Posterior cingulate gyrus (tissue), 11 donors: ENCODE measurements at regions of chr19 and their contacts with region 1.

Region 1: DNA sequence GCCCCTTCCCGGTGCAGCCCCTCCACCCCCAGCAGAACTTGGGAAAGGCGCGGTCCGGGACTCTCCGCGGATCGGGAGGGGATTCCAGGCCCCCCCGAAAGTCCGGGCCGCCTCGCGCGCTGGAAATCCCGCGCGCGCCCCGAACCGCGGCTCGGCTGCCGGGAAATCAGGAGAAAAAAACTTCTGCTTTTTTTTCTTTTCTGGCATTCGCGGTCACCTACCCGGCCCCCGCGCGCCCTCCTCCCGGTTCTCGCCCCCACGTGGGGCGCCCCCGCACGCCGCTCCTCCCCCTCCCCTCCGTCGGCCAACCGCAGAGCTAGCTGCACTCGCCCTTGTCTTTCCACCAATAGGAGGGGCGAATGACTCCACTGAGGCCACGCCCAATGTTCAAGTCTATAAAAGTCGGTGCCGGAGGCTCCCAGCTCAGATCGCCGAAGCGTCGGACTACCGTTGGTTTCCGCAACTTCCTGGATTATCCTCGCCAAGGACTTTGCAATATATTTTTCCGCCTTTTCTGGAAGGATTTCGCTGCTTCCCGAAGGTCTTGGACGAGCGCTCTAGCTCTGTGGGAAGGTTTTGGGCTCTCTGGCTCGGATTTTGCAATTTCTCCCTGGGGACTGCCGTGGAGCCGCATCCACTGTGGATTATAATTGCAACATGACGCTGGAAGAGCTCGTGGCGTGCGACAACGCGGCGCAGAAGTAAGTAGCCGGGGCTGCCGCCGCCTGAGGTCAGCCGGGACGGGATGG is at the start of gene GADD45B:
- DNase-seq: peak; percentile 95 to 100 (median 97)

Region 2: GRCh38 chr19:2578901-2579677 is 103.2 kb after region 1 on chr19:
- intact Hi-C with region 1: loop called (anchors 1 kb)
- DNase-seq: peak; percentile 71 to 98 (median 84)

Region 3: GRCh38 chr19:2610637-2611482 is 135.0 kb after region 1 on chr19:
- intact Hi-C with region 1: loop called (anchors 1 kb)
- DNase-seq: peak; percentile 80 to 98 (median 92)